ENCODE measurements at regions of chr3 and their contacts with region 1.

Region 1: GRCh38 chr3:9843715-9844438 is at the start of gene RPUSD3:
- DNase-seq: peak; percentile 95
- ATAC-seq: peak; percentile 100
- H3K4me3 Mint-ChIP-seq: peak within 1 kb of the TSS; percentile 98
- H3K27ac Mint-ChIP-seq: peak within 1 kb of the TSS; percentile 86
- H3K4me1 Mint-ChIP-seq: peaks cover 20% of the 10 kb centered on the region
- H3K27me3 Mint-ChIP-seq: no peaks in the 10 kb centered on the region
- CTCF ChIP-seq: no peak
- total RNA-seq, gene RPUSD3: 49.5 and 55.7 TPM in 2 replicates

Region 2: DNA sequence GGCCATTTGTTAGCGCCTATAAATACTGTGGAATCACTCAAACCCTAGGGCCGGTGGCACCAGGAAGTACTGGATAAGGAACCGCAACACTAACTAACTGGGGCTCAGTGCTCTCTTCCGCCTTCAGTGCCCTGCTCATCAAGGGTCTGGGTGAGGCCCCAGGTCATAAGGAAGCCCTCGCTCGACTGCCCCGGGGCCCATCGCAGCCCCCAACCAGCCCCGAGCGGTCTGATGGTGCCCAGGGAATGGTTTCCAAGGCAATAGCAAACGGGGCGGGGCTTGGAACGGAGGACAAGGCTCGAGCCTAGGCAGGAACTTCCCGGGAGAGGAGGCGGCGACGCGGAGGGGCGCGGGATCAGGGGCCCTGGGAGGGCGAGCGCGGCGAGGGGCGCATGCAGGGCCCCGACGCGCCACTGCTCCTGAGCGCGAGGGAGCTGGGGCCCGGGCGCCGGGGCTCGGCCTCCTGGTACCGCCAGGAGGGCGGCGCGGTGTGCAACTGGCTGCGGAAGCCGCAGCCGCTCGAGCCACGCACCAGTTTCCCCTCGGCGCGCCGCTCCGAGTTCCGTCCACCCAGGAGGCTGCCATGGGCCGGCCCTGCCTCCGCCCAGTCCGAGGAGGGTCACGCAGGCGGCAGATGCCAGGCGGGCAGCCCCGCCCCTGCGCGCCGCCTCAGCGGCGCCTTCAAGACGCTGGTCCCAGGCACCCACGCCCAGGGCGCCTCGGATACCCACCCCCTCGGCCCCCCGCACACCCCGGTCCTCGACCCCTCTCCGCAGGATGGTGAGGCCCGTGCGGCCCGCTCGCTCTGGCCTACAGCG is 34.1 kb before region 1 on chr3 and contains the start of gene TTLL3:
- CTCF ChIA-PET with region 1: no interaction called
- POLR2A ChIA-PET with region 1: interaction called, 5 read pairs
- intact Hi-C with region 1: loop called (anchors 2 kb)
- DNase-seq: peak; percentile 55
- ATAC-seq: peak; percentile 69
- H3K4me3 Mint-ChIP-seq: peak within 1 kb of the TSS; percentile 91
- H3K27ac Mint-ChIP-seq: peak within 1 kb of the TSS; percentile 98
- H3K4me1 Mint-ChIP-seq: peaks cover 33% of the 10 kb centered on the region
- H3K27me3 Mint-ChIP-seq: no peaks in the 10 kb centered on the region
- CTCF ChIP-seq: no peak
- total RNA-seq, gene TTLL3: 51.4 and 61.9 TPM in 2 replicates

Region 3: GRCh38 chr3:9820543-9820942 is 23.3 kb before region 1 on chr3:
- CTCF ChIA-PET with region 1: no interaction called
- POLR2A ChIA-PET with region 1: no interaction called
- intact Hi-C with region 1: no loop called
- DNase-seq: no peak
- ATAC-seq: no peak
- H3K4me3 Mint-ChIP-seq: no peak overlapping the region
- H3K27ac Mint-ChIP-seq: no peak overlapping the region
- H3K4me1 Mint-ChIP-seq: no peaks in the 10 kb centered on the region
- H3K27me3 Mint-ChIP-seq: no peaks in the 10 kb centered on the region
- CTCF ChIP-seq: no peak

Region 4: DNA sequence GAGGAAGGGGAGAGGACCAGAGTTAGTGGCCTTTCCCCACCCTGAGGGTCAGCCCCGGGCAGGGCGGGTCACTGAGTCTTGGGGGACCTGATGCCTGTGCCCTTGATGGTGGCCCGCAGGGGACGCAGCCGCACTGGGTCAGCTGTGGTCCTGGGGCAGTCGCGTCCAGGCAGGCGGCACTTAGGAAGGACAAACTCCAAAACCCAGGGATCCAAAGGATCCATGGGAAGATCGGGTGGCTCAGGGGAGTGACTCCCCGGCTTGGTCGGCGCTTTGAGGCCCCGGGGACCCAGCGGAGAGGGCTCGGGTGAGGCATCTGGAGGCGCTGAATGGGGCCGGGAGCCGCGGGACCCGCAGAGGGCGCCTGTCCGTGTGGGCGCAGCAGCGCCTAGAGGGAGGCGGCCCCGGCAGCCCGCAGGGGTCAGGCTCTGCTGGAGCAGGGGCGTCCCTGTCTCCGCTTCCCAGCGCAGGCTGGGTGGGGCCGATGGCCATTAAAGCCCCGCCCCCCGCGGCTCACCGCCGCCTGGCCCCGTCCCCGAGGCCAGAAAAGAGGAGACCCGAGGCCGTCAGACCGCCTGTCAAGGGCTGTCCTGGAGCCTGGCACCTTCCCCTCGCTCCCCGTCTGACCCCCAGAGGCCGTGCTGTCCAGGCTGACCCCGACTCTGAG is 18.6 kb after region 1 on chr3:
- CTCF ChIA-PET with region 1: no interaction called
- POLR2A ChIA-PET with region 1: no interaction called
- intact Hi-C with region 1: no loop called
- DNase-seq: peak; percentile 38
- ATAC-seq: peak; percentile 88
- H3K4me3 Mint-ChIP-seq: peak overlapping the region; percentile 52
- H3K27ac Mint-ChIP-seq: no peak overlapping the region
- H3K4me1 Mint-ChIP-seq: peaks cover 2% of the 10 kb centered on the region
- H3K27me3 Mint-ChIP-seq: peaks cover 9% of the 10 kb centered on the region
- CTCF ChIP-seq: no peak

Region 5: GRCh38 chr3:9946112-9947024 is 102.5 kb after region 1 on chr3:
- CTCF ChIA-PET with region 1: no interaction called
- POLR2A ChIA-PET with region 1: interaction called, 5 read pairs
- intact Hi-C with region 1: loop called (anchors 5 kb)
- DNase-seq: peak; percentile 75
- ATAC-seq: peak; percentile 91
- H3K4me3 Mint-ChIP-seq: peak overlapping the region; percentile 79
- H3K27ac Mint-ChIP-seq: peak overlapping the region; percentile 79
- H3K4me1 Mint-ChIP-seq: peaks cover 11% of the 10 kb centered on the region
- H3K27me3 Mint-ChIP-seq: no peaks in the 10 kb centered on the region
- CTCF ChIP-seq: no peak

Measured in activated B cell treated with CpG ODN at 0.5 μM for 24 hours (primary cell).